ENCODE measurements at regions of chr7 and their contacts with region 1.

Region 1: DNA sequence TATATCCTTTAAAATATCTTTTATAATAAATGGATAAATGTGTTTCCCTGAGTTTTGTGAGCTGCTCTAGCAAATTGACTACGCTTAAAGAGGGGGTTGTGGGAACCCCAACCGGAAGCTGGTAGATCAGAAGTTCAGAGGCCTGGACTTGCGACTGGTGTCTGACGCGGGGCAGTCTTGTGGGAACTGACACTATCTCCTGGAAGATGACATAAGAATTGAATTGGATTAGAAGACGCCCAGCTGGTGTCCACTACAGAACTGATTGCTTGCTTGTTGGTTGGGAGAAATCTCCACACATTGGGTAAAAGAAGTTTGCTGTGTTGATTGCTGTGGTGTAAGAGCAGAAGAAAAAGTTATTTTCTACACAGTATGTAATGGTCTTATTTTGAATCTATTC is 51.1 kb upstream of the AHR start:
- DNase-seq: no peak
- ATAC-seq: no peak
- H3K4me3 ChIP-seq: no peak overlapping the region
- H3K4me3 Mint-ChIP-seq: no peak overlapping the region
- H3K27ac ChIP-seq: no peak overlapping the region
- H3K27ac Mint-ChIP-seq: no peak overlapping the region
- H3K4me1 ChIP-seq: no peaks in the 10 kb centered on the region
- H3K4me1 Mint-ChIP-seq: no peaks in the 10 kb centered on the region
- H3K27me3 ChIP-seq: no peaks in the 10 kb centered on the region
- H3K27me3 Mint-ChIP-seq: no peaks in the 10 kb centered on the region
- CTCF ChIP-seq: no peak

Region 2: DNA sequence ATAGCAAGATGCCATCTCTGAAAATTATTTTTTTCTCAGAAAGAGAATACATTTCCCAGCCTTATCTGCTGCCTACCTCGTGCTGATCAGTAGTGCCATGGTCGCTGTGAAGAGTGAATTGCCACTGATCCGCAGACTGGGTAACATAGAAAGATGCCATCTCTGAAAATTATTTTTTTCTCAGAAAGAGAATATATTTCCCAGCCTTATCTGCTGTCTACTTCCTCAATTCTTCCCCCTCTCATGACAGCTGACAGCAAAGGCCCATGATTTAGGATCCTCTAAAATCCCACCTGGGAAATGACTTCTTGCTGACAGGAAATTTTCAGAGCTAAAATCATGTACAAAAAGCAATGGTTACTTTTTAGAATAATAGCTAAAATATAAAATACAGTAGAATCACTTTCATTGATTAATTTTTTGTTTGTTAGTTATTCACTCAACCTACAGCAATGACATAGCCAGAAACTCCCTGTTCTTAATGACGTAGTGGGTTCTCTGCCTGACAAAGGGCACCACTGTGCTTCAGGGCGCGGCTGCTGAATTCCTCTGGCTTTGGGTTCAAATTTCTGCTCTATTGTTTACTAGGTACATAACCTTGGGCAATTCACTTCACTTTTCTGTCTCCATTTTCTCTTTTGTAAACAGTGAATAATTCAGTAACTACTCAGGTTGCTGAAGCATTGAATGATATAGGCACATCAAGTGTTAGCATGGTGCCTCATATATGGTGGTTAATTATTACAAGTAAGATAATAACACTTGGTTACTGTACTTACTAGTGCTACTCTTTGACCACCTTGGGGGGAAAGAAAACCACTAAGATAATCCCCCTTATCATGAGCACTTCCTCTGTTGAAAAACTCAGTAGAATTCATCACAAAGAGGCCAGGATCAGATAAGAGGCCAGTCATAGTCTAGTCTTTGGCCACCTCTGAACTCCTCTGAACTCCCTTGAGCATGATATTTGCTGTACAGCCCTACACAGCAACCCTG is 41.1 kb before region 1 on chr7:
- CTCF ChIA-PET with region 1: no interaction called
- POLR2A ChIA-PET with region 1: no interaction called
- intact Hi-C with region 1: loop called in 1 of 2 experiments (anchors 5 kb)
- DNase-seq: no peak
- ATAC-seq: no peak
- H3K4me3 ChIP-seq: no peak overlapping the region
- H3K4me3 Mint-ChIP-seq: no peak overlapping the region
- H3K27ac ChIP-seq: no peak overlapping the region
- H3K27ac Mint-ChIP-seq: no peak overlapping the region
- H3K4me1 ChIP-seq: no peaks in the 10 kb centered on the region
- H3K4me1 Mint-ChIP-seq: no peaks in the 10 kb centered on the region
- H3K27me3 ChIP-seq: no peaks in the 10 kb centered on the region
- H3K27me3 Mint-ChIP-seq: no peaks in the 10 kb centered on the region
- CTCF ChIP-seq: no peak

Region 3: DNA sequence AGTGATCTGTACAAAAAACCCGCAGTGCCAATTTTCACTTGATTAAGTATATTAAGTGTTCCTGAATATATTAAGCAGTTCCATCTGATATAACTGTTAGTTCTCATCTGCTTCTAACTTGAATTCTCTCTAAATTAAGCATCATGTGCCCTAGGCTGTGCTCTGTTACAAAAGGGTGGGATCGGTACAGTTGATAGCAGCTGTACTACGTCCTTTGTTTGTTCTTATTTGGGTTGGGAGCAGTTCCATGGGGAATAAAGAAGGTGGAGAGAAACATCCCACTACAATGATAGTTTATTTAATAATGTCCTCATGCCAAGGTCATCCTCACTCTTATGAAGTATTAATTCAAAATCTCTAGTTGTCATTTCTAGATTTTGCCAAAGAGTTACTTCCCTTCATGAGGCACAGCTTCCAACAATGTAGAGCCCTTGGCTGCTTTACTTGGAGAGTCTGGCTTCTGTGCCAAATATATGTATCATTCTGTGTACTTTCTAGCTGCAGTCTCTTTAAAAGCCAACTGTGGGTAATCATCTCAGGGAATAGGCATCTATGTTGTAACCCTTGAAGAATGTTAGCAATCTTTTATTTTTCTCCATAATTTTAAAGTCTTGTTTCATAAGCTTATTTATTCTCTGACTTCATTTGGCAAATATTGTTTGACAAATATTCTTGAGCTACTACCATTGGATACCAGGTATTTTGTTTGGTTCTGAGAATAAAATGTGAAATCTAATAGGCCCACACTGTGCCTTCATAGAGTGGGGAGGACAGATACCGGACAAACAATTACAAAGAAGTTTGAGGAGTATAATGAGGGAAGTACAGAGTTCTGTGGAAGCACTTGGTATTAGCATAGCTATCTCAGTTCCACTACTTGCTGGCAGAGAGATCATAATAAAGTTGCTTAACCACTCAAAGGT is 28.7 kb after region 1 on chr7:
- CTCF ChIA-PET with region 1: no interaction called
- POLR2A ChIA-PET with region 1: no interaction called
- intact Hi-C with region 1: no loop called
- DNase-seq: no peak
- ATAC-seq: no peak
- H3K4me3 ChIP-seq: no peak overlapping the region
- H3K4me3 Mint-ChIP-seq: no peak overlapping the region
- H3K27ac ChIP-seq: no peak overlapping the region
- H3K27ac Mint-ChIP-seq: no peak overlapping the region
- H3K4me1 ChIP-seq: no peaks in the 10 kb centered on the region
- H3K4me1 Mint-ChIP-seq: peaks cover 9% of the 10 kb centered on the region
- H3K27me3 ChIP-seq: no peaks in the 10 kb centered on the region
- H3K27me3 Mint-ChIP-seq: no peaks in the 10 kb centered on the region
- CTCF ChIP-seq: no peak